ENCODE measurements at regions of chr22 and their contacts with region 1.

Region 1: GRCh38 chr22:26565196-26565595 is 24.7 kb downstream of the TPST2 start:
- DNase-seq: no peak
- H3K4me3 ChIP-seq: no peak overlapping the region
- H3K27ac ChIP-seq: no peak overlapping the region
- H3K4me1 ChIP-seq: no peaks in the 10 kb centered on the region
- H3K27me3 ChIP-seq: no peaks in the 10 kb centered on the region
- CTCF ChIP-seq: no peak

Region 2: DNA sequence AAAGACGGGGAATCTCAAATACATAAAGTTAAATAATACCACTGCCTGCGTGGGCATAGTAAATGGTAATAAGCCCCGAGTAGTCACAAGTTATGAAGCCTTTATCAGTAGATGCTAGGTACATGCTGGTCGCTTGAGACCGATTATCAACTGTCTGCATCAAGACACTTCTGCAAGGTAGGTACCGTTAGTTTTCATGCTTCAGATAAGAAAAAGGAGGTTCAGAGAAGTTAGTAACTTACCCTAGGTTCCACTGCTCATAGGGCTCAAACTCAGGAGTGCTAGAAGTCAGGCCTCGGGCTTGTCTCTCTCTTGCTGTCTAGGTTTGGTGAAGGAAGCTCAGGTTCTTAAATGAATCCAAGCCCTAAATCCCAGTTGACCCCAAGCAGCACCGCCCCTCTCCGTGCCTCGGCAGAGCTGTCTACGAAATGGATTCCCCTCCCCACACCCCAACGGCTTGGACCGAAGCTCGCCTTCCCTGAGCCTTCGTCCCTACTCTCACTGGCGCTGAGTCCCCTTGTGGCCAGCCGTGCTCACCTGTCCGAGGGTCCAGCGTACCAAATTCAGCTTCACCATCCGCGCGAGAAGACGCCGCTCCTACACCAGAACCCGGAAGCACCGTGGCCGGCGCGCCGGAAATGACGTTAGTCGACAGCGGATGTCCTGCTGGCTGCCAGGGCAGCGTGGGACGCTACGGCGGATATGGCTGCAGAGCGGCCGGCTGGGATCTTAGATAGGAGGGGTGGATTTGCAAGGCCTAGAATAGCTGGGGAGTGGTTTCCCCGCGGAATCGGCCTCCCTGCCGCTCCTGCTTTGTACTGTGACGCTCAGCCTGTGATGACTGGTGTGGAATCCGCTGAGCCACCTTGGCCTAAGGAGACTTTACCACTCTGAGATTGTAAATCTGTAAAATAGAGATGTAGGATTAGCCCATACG is 53.1 kb before region 1 on chr22 and contains the start of gene TFIP11:
- CTCF ChIA-PET with region 1: no interaction called
- POLR2A ChIA-PET with region 1: interaction called, 16 read pairs
- intact Hi-C with region 1: no loop called
- DNase-seq: peak; percentile 93
- H3K4me3 ChIP-seq: peak within 1 kb of the TSS; percentile 81
- H3K27ac ChIP-seq: peak within 1 kb of the TSS; percentile 73
- H3K4me1 ChIP-seq: peaks cover 15% of the 10 kb centered on the region
- H3K27me3 ChIP-seq: no peaks in the 10 kb centered on the region
- CTCF ChIP-seq: no peak
- total RNA-seq, gene TFIP11: 44.0 and 46.4 TPM in 2 replicates

Region 3: GRCh38 chr22:26689513-26690301 is 124.5 kb after region 1 on chr22:
- CTCF ChIA-PET with region 1: no interaction called
- POLR2A ChIA-PET with region 1: no interaction called
- intact Hi-C with region 1: no loop called
- DNase-seq: no peak
- H3K4me3 ChIP-seq: no peak overlapping the region
- H3K27ac ChIP-seq: no peak overlapping the region
- H3K4me1 ChIP-seq: no peaks in the 10 kb centered on the region
- H3K27me3 ChIP-seq: no peaks in the 10 kb centered on the region
- CTCF ChIP-seq: no peak